Motor neuron (in vitro differentiated cells): ENCODE measurements at regions of chr16 and their contacts with region 1.

Region 1: DNA sequence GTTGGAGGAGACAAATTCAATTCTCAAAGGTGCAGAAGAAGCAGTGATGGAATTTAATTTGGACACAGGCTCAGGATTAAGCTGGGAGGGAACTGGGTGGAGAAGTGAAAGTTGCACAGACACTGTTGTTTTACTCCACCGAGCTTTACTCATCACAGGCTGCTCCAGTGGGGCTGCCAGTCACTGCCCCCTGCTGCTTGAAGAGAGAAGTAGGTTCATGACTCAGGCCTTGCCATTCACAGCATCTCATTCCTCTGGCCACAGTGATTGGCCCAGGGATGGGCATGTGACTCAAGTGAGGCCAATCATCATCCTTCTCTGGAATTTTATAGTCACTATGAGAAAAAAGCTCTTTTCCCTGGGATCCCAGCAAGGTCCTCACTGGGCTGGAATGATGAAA is 11.8 kb downstream of the GNAO1 start:
- ATAC-seq: peak in 4 of 8 experiments; percentile 25 to 100 (median 90)
- H3K4me3 ChIP-seq: no peak overlapping the region
- H3K27ac ChIP-seq: no peak overlapping the region
- H3K4me1 ChIP-seq: peaks cover 0 to 15% of the 10 kb centered on the region in 2 donors

Region 2: DNA sequence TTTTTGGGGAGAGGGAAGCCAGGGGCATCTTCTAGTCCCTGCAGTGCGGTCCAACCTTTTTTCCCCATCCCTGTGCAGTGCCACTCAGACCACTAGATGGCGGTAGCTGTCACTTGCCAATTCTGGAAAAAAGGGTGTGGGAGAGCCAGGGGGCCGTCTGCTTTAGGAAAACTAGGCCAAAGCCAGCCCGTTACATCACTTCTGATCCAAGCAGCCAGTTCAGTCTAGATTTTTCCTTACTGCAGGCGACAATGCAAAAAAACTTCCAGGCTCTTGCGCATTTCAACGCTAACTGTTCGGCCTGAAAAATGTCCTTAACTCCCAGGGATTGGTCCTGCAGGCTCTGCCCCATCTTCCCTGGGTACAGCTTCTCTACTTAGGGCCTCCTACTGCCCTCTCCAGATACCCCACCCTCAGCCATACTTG is 258.7 kb before region 1 on chr16:
- in situ Hi-C with region 1: loop called in 1 of 9 experiments (anchors 25 kb)
- ATAC-seq: peak; percentile 93 to 99 (median 98)
- H3K4me3 ChIP-seq: no peak overlapping the region
- H3K27ac ChIP-seq: peak overlapping the region in 1 of 2 donors; percentile 13
- H3K4me1 ChIP-seq: peaks cover 0 to 3% of the 10 kb centered on the region in 2 donors